ENCODE measurements at regions of chr19 and their contacts with region 1.

Region 1: DNA sequence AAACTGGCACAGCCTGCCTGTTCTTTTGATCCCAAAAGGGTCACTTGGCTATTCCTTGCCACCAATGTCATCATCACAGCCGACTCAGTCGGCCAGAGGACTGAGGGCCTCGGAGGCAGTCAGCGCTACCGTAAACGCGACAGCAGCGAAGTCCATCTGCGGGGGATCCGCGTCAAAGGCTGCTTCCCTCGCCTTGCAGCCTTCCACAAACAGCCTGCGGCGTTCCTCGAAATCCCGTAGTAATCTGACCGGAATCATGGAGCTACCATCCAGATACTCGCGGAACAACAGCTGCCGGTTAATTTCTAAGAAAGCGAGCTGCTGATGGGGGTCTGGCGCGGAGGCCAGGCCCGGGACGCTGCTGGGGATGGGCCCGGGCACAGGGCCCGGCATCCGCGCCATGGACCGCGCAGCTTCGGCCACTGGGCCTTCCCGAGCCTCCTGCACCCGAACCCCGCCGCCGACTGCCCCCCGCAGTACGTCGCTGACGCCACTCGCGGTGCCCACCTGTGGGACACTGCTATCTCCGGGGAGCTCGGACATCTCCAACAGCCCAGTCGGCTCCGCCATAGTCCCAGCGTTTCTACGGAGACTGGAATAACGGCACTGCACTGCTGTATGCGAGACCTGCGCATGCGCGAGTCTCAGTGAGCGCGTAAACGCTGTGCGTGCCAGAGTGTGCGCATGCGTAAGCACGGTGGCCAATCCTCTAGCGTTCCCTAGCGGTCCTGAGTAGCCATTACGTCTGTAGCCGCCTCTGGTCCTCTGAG is at the start of gene EID2B:
- DNase-seq: peak; percentile 98
- ATAC-seq: peak; percentile 98
- total RNA-seq, gene EID2B: 2.3 to 2.4 TPM

Region 2: GRCh38 chr19:39444571-39445264 is 87.7 kb before region 1 on chr19:
- intact Hi-C with region 1: loop called in 1 of 2 experiments (anchors 5 kb)
- DNase-seq: no peak
- ATAC-seq: peak; percentile 4 to 7

Region 3: GRCh38 chr19:39474139-39474622 is 58.2 kb before region 1 on chr19:
- intact Hi-C with region 1: loop called in 1 of 2 experiments (anchors 2 kb)
- DNase-seq: peak; percentile 69
- ATAC-seq: peak; percentile 58 to 76

Region 4: GRCh38 chr19:39480337-39481228 is 51.8 kb before region 1 on chr19 and contains the start of gene TIMM50:
- intact Hi-C with region 1: loop called (anchors 2 to 10 kb)
- DNase-seq: peak; percentile 99
- ATAC-seq: peak; percentile 98 to 99
- total RNA-seq, gene TIMM50: 60.3 to 71.2 TPM

Measured in left cardiac atrium (tissue), 4 donors.